ENCODE measurements at regions of chr6 and their contacts with region 1.

Region 1: GRCh38 chr6:56637640-56638039 is 5.0 kb downstream of the DST start:
- DNase-seq: no peak
- ATAC-seq: peak; percentile 67

Region 2: GRCh38 chr6:56699066-56699654 is 61.5 kb after region 1 on chr6:
- intact Hi-C with region 1: loop called (anchors 5 kb)
- DNase-seq: no peak
- ATAC-seq: peak; percentile 66

Region 3: GRCh38 chr6:56851541-56852259 is 214.1 kb after region 1 on chr6:
- intact Hi-C with region 1: loop called (anchors 5 kb)
- DNase-seq: peak; percentile 35
- ATAC-seq: peak; percentile 89

Region 4: GRCh38 chr6:56891754-56892153 is 254.1 kb after region 1 on chr6:
- intact Hi-C with region 1: no loop called
- DNase-seq: no peak
- ATAC-seq: no peak

Measured in left ventricle myocardium superior (tissue), 1 donor.